ENCODE measurements at regions of chr1 and their contacts with region 1.

Region 1: GRCh38 chr1:219385786-219386427 is 212.2 kb downstream of the LYPLAL1 start:
- DNase-seq: peak; percentile 96
- ATAC-seq: peak; percentile 98
- H3K4me3 ChIP-seq: no peak overlapping the region
- H3K27ac ChIP-seq: no peak overlapping the region
- H3K4me1 ChIP-seq: peaks cover 4% of the 10 kb centered on the region; the same call in 1 of the 2 replicates
- H3K27me3 ChIP-seq: no peaks in the 10 kb centered on the region
- CTCF ChIP-seq: peak; percentile 99

Region 2: DNA sequence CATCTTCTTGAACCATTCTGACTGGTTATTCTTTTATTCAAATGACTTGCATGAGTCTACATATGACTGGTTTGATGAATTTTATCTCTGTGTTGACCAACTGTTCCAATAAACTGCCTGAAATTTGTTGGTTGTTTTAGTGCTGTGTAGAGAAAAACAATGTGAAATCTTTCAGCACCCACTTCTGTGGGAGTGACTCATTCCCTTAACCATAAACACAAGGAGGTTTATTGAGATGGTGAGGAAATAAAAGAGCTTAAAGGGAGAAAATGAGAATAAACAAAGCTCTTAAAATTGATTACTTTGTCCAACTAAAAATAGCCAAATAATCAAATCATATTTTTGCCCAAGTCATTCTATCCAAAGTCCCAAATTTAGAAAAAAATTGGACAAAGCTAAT is 699.6 kb before region 1 on chr1:
- CTCF ChIA-PET with region 1: no interaction called
- POLR2A ChIA-PET with region 1: no interaction called
- intact Hi-C with region 1: loop called (anchors 5 kb)
- DNase-seq: peak; percentile 82
- ATAC-seq: peak; percentile 84
- H3K4me3 ChIP-seq: no peak overlapping the region
- H3K27ac ChIP-seq: no peak overlapping the region
- H3K4me1 ChIP-seq: peaks cover 7% of the 10 kb centered on the region; the same call in 1 of the 2 replicates
- H3K27me3 ChIP-seq: no peaks in the 10 kb centered on the region
- CTCF ChIP-seq: no peak

Region 3: DNA sequence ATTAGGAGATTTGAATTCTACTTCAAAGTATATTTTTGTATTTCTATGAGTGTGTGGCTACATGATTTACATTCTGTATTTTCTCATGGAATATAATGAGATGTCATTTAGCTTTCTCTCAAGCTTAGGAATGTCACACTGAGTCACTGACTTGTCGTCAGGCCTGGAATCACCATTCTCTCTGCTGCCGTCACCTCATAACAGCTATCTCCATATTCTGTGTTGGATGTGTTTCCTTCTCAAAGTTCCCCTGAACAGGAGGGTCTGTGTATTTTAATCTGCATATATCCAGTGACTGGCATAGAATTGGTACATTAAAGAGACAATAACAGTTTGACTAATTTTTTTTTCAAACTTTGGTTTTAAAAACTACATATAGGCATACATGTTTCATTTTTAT is 176.3 kb before region 1 on chr1:
- CTCF ChIA-PET with region 1: no interaction called
- POLR2A ChIA-PET with region 1: no interaction called
- intact Hi-C with region 1: loop called (anchors 1 kb)
- DNase-seq: peak; percentile 23
- ATAC-seq: peak; percentile 48
- H3K4me3 ChIP-seq: no peak overlapping the region
- H3K27ac ChIP-seq: peak overlapping the region; percentile 3
- H3K4me1 ChIP-seq: peaks cover 16% of the 10 kb centered on the region
- H3K27me3 ChIP-seq: no peaks in the 10 kb centered on the region
- CTCF ChIP-seq: no peak

Region 4: DNA sequence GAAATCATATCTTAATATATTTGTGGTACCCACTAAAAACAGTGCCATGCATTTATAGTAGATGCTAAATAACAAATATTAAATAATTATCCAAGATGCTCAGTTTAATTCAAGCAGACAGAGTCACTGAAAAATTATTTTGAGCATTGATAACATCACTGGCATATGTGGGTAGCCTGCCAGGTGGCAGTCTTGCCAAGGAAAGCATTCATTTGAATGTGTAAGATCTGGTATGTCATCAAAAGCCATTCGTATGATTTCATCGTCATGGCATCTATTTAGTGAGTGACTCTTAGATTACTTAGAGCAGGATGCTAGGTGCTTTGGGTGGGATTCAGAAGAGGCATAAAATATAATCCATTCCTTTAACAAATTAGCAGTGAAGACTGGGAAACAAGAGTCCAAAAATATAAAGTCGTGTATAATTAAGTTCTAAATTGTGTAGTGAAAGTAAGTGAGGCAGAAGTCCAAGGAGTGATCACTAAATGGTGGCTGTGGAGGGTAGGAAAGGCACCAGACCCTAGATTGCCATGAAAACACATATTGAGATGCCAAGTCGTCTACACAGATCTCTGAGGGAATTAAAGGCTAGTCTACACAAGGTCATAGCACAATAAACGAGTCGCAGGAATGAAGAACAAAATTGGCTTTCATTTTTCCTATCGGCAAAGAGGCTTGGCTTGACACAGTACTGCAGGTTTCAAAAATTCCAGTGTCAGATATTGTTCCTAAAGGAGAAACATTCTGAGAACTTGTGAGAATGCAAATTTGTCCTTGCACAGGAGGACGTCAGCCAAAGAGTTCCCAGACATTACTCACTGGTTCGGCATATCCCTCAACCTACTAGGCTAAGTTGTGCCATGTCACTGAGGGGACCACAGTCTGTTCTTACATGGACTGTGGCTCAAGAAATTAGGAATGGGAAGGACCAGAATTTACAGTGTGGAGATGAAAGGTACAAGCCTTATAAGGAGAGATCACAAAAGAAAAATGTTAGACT is 81.4 kb before region 1 on chr1:
- CTCF ChIA-PET with region 1: no interaction called
- POLR2A ChIA-PET with region 1: no interaction called
- intact Hi-C with region 1: loop called (anchors 1 kb)
- DNase-seq: peak; percentile 99
- ATAC-seq: peak; percentile 92
- H3K4me3 ChIP-seq: peak overlapping the region; percentile 13; the same call in 1 of the 2 replicates
- H3K27ac ChIP-seq: peak overlapping the region; percentile 25
- H3K4me1 ChIP-seq: peaks cover 21% of the 10 kb centered on the region
- H3K27me3 ChIP-seq: no peaks in the 10 kb centered on the region
- CTCF ChIP-seq: peak; percentile 89